Esophagus muscularis mucosa (tissue), 4 donors: ENCODE measurements at regions of chr6 and their contacts with region 1.

Region 1: DNA sequence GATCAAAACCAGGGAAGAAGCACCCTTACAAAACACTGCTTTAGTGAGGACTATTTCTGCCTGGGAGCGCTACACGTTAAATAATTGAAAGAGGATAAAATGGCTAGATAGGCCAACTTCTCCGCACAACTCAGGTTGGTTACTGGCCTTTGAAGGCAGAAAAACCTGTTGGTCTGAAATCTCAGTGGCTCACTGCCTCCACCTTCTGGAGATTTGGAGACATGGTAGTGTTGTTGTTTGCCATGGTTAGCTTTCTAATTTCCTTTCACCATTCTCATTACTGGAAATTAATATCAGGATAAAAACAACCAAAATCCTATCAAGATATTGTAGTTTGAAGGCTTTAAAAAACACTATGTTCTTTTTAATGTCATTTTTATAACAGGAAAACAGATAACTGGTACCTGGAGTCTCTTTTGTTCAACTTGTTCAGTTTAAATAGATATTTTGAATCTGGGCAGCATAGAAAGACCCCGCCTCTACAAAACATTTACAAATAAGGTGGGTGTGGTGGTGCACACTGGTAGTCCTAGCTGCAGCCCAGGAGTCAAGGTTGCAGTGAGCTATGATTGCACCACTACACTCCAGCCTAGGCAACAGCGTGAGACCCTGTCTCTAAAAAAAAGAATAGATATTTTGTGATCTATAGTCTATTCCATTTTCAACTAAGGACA is 27.5 kb upstream of the BCLAF1 start:
- DNase-seq: no peak
- H3K4me3 ChIP-seq: no peak overlapping the region
- H3K27ac ChIP-seq: no peak overlapping the region
- H3K4me1 ChIP-seq: no peaks in the 10 kb centered on the region
- H3K27me3 ChIP-seq: no peaks in the 10 kb centered on the region
- CTCF ChIP-seq: peak; percentile 62 to 88 (median 75)
- EP300 ChIP-seq: no peak
- POLR2A ChIP-seq: no peak

Region 2: DNA sequence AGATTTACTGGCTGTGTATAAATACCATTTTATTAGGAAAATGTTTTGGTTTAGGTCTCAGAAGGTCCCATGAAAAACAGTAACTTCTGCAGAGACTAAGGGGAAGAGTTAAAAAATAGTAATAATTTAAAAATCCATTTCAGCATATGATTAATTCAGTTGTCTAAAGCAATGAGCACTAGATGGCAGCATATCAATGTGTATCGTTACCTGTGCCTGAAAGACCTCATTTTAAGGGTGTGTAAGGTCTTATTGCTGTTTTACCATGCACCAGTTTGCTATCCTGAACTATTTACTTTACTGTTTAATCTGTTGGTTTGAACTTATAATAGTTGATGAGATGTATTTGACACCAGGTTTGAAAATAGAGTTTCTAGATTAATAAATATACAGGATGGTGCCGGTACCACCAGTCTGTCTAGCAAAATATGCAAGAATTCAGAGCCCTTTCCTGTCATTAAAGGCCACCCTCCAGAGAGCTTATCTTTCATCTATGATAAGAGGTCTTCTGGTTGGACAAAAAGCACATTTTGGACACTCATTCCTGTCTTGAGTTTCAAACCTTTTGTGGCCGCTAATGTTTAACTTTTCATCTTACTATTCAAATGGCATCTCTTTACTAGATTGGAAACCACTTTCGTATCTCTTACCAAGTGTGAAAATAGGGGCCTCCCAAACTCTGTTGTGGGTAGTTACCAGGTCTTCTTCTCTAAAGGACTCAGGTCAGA is 810.7 kb before region 1 on chr6:
- intact Hi-C with region 1: loop called (anchors 5 kb)
- DNase-seq: no peak
- H3K4me3 ChIP-seq: no peak overlapping the region
- H3K27ac ChIP-seq: no peak overlapping the region
- H3K4me1 ChIP-seq: no peaks in the 10 kb centered on the region
- H3K27me3 ChIP-seq: no peaks in the 10 kb centered on the region
- CTCF ChIP-seq: peak; percentile 47 to 54 (median 47)
- EP300 ChIP-seq: no peak
- POLR2A ChIP-seq: no peak

Region 3: DNA sequence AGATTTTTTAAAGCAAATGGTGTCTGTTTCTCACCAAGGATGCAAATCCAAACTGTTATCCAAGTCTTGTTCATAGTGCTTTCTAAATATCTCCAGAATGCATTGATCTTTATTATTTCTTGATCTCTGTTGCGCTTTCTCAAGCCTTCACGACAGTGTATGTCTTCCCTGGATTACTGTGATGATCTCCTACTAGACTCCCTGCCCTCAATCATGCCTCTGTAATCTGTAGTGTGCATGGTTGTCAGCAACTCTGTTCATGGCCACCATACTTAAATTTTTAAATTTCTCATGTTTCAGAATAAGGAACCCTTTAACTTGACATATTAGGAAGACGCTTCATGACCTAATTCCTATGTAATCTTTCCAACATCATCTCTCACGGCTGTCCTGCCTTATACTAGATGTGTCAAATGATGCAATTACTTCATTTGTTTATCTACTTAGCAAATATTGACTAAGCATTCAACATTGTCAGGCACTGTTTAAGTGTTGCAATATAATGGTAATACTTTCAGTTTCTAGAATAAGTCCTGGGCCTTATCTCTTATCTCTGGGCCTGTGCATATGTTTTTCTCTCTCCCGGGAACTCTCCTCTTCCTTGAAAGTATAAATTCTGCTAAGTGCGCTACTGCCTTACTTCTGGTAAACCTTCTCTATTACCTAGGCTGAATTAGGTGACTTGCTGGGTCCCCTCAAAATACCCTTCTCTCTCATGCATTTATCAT is 794.0 kb before region 1 on chr6:
- intact Hi-C with region 1: no loop called
- DNase-seq: no peak
- H3K4me3 ChIP-seq: no peak overlapping the region
- H3K27ac ChIP-seq: no peak overlapping the region
- H3K4me1 ChIP-seq: no peaks in the 10 kb centered on the region
- H3K27me3 ChIP-seq: no peaks in the 10 kb centered on the region
- CTCF ChIP-seq: no peak
- EP300 ChIP-seq: no peak
- POLR2A ChIP-seq: no peak

Region 4: GRCh38 chr6:136289579-136290409 is 27.4 kb before region 1 on chr6 and contains the start of gene BCLAF1:
- intact Hi-C with region 1: loop called (anchors 5 kb)
- DNase-seq: peak; percentile 100
- H3K4me3 ChIP-seq: peak within 1 kb of the TSS; percentile 82 to 100 (median 89)
- H3K27ac ChIP-seq: peak within 1 kb of the TSS; percentile 99 to 100 (median 100)
- H3K4me1 ChIP-seq: peaks cover 47 to 50% (median 49%) of the 10 kb centered on the region in 4 donors
- H3K27me3 ChIP-seq: no peaks in the 10 kb centered on the region
- CTCF ChIP-seq: peak in 1 of 3 experiments; percentile 15
- EP300 ChIP-seq: peak; percentile 71
- POLR2A ChIP-seq: peak; percentile 98
- total RNA-seq, gene BCLAF1: 69.7 to 90.1 (median 75.4) TPM